B cell (primary cell): ENCODE measurements at regions of chr9 and their contacts with region 1.

Region 1: GRCh38 chr9:68919661-68920060 is 94.3 kb downstream of the PRKACG start:
- DNase-seq: peak; percentile 48
- ATAC-seq: peak; percentile 84
- H3K4me3 ChIP-seq: no peak overlapping the region
- H3K4me3 Mint-ChIP-seq: peak overlapping the region; percentile 30
- H3K27ac ChIP-seq: peak overlapping the region; percentile 30 to 67
- H3K27ac Mint-ChIP-seq: peak overlapping the region; percentile 83
- H3K4me1 ChIP-seq: peaks cover 12 to 21% of the 10 kb centered on the region in 2 donors
- H3K4me1 Mint-ChIP-seq: peaks cover 33% of the 10 kb centered on the region
- H3K27me3 ChIP-seq: no peaks in the 10 kb centered on the region
- H3K27me3 Mint-ChIP-seq: no peaks in the 10 kb centered on the region
- CTCF ChIP-seq: no peak

Region 2: GRCh38 chr9:68802525-68803015 is 117.1 kb before region 1 on chr9:
- CTCF ChIA-PET with region 1: no interaction called
- POLR2A ChIA-PET with region 1: no interaction called
- intact Hi-C with region 1: no loop called
- DNase-seq: peak; percentile 72
- ATAC-seq: peak; percentile 94
- H3K4me3 ChIP-seq: peak overlapping the region in 3 of 5 experiments; percentile 23 to 36 (median 26)
- H3K4me3 Mint-ChIP-seq: no peak overlapping the region
- H3K27ac ChIP-seq: peak overlapping the region in 1 of 2 donors; percentile 37
- H3K27ac Mint-ChIP-seq: no peak overlapping the region
- H3K4me1 ChIP-seq: peaks cover 46 to 55% of the 10 kb centered on the region in 2 donors
- H3K4me1 Mint-ChIP-seq: peaks cover 47% of the 10 kb centered on the region
- H3K27me3 ChIP-seq: no peaks in the 10 kb centered on the region
- H3K27me3 Mint-ChIP-seq: no peaks in the 10 kb centered on the region
- CTCF ChIP-seq: no peak

Region 3: DNA sequence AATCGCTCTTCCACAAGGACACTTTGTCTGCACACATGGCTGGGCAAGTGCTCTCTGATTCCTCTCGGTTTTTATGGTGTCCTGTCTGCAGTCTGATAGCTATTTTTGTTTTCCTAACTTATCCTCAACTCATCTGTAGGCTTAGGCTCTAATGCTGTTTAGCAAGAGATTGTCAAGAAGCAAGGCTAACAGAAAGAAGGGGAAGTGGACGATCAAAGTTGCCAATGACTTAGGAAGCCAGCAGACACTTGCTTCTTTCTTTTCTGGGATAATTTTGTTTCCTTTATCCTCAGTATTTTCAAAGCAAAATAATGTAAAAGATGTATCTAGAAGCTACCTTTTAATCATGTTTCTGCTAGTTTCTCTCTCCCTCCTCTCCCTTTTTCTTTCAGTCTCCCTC is 36.4 kb before region 1 on chr9:
- CTCF ChIA-PET with region 1: no interaction called
- POLR2A ChIA-PET with region 1: no interaction called
- intact Hi-C with region 1: loop called (anchors 5 kb)
- DNase-seq: no peak
- ATAC-seq: no peak
- H3K4me3 ChIP-seq: no peak overlapping the region
- H3K4me3 Mint-ChIP-seq: no peak overlapping the region
- H3K27ac ChIP-seq: no peak overlapping the region
- H3K27ac Mint-ChIP-seq: no peak overlapping the region
- H3K4me1 ChIP-seq: no peaks in the 10 kb centered on the region
- H3K4me1 Mint-ChIP-seq: peaks cover 5% of the 10 kb centered on the region
- H3K27me3 ChIP-seq: no peaks in the 10 kb centered on the region
- H3K27me3 Mint-ChIP-seq: no peaks in the 10 kb centered on the region
- CTCF ChIP-seq: no peak

Region 4: GRCh38 chr9:68905129-68905528 is 14.5 kb before region 1 on chr9:
- CTCF ChIA-PET with region 1: interaction called, 3 read pairs
- POLR2A ChIA-PET with region 1: no interaction called
- intact Hi-C with region 1: loop called (anchors 2 kb)
- DNase-seq: no peak
- ATAC-seq: no peak
- H3K4me3 ChIP-seq: no peak overlapping the region
- H3K4me3 Mint-ChIP-seq: no peak overlapping the region
- H3K27ac ChIP-seq: no peak overlapping the region
- H3K27ac Mint-ChIP-seq: no peak overlapping the region
- H3K4me1 ChIP-seq: no peaks in the 10 kb centered on the region
- H3K4me1 Mint-ChIP-seq: peaks cover 2% of the 10 kb centered on the region
- H3K27me3 ChIP-seq: no peaks in the 10 kb centered on the region
- H3K27me3 Mint-ChIP-seq: no peaks in the 10 kb centered on the region
- CTCF ChIP-seq: no peak